Activated CD4-positive, alpha-beta memory T cell treated with anti-CD3 and anti-CD28 coated beads for 36 hours (primary cell): ENCODE measurements at regions of chr6 and their contacts with region 1.

Region 1: DNA sequence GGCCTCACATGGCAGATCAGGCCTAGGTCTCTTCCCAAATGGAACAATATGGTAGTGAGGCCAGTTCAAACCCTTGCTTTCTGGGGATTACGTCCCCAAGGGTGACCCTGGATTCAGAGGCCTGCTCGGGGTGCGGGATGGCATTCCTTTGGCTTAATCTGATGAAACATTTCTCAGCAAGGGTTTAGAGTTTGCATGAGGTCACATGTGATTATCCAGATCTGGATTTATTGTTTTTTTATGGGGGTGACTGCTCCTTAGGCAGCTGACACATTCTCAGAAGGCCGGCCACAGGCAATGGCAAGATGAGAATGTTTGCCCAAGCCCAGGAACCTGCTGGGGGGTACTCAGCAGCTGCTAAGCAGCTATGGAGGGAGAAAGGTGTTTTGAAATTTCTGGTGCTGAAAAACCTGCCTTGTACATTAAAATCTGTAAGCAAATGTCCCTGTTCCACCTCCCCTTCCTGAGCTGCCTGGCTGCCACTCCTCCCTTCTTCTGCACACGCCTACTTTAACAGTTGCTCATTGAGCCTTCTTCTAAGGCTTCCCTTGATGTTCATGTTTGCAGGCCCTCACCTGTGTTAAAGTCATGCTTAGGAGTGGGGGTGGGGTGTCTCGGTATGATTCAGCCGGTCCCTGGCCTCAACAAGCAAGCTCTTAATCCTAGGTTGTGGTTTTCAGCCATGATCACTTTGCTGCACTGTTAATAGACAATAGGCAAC is 37.9 kb upstream of the FUCA2 start:
- DNase-seq: peak; percentile 83
- H3K4me3 Mint-ChIP-seq: no peak overlapping the region
- H3K27ac Mint-ChIP-seq: peak overlapping the region; percentile 63
- H3K4me1 Mint-ChIP-seq: peaks cover 90% of the 10 kb centered on the region
- H3K27me3 Mint-ChIP-seq: no peaks in the 10 kb centered on the region

Region 2: DNA sequence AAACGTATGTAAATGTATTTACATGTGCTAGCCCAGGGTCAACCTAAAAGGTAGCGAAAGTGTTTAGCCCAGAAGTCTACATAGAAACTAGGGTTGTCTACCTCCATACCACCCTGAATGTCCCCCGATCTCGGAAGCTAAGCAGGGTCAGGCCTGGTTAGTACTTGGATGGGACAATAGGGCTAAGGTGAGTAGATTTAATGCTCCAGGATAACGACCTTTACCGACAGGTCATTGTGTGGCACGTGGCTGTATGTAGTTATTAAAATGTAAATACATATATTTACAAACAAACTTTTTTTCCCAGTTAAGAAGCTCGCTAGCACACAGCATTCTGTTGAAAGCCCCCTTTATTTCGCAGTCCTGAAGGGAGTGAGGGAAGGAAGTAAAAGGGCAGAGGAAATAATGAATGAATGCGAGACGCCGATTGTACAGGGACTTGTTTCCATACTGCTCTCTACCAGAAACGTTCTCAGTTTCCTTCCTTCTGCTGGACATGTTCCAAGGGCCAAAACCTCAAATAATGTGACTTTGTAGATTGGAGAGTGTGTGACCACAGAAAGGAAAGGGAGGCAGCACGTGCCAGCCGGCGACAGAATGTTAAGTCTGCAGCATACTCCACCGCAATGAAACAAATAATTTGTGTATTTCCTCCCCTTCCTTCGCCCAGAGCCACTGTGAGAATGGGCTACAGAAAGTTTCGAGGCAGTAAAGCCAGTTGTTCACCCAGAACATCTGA is 99.5 kb before region 1 on chr6:
- CTCF ChIA-PET with region 1: no interaction called
- POLR2A ChIA-PET with region 1: no interaction called
- intact Hi-C with region 1: no loop called
- DNase-seq: peak; percentile 43
- H3K4me3 Mint-ChIP-seq: peak overlapping the region; percentile 88
- H3K27ac Mint-ChIP-seq: peak overlapping the region; percentile 91
- H3K4me1 Mint-ChIP-seq: peaks cover 41% of the 10 kb centered on the region
- H3K27me3 Mint-ChIP-seq: no peaks in the 10 kb centered on the region

Region 3: GRCh38 chr6:143569040-143569439 is 19.7 kb after region 1 on chr6:
- CTCF ChIA-PET with region 1: no interaction called
- POLR2A ChIA-PET with region 1: no interaction called
- intact Hi-C with region 1: loop called (anchors 1 kb)
- DNase-seq: peak; percentile 13
- H3K4me3 Mint-ChIP-seq: no peak overlapping the region
- H3K27ac Mint-ChIP-seq: no peak overlapping the region
- H3K4me1 Mint-ChIP-seq: peaks cover 43% of the 10 kb centered on the region
- H3K27me3 Mint-ChIP-seq: no peaks in the 10 kb centered on the region

Region 4: DNA sequence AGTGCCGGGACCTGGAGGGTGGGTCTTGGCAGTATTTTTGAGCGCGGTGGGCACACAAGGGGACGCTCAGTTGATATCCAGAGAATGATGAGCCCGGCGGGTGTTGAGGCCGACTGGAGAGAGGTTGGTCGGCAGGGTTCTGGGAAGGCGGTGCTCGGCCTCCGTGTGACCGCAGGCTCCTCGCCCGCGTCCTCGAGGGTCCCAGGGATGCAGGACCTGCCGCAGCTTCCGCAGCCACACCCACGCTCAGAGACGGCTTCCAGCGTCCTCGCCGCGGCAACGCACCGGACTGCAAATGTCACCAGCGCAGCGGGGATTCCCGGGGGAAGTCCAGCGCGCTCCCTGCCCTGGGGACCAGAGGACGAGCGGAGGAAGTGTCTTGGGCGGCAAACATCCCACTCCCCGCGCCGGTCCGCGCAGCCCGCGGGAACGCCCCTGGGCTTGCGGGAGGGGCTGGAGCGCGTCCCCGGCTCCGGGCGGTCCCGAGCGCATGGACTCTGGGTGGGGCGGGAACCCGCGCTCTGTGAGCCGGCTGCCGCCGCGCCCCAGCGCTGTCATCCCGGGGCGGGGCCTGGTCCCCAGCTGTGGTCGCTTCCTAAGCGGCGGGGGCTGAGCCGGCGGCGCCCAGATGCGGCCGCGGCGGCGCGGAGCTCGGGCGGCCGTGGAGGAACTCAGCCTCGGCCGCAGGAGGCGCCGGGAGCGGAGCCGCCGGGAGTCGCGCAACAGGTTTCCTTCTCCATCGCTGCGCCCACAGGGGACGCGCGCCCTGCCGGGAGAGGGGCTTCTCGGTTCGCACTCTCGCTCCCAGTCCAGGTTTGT is 600.7 kb after region 1 on chr6 and contains the start of gene STX11:
- CTCF ChIA-PET with region 1: no interaction called
- POLR2A ChIA-PET with region 1: no interaction called
- intact Hi-C with region 1: loop called (anchors 10 kb)
- DNase-seq: peak; percentile 88
- H3K4me3 Mint-ChIP-seq: peak within 1 kb of the TSS; percentile 88
- H3K27ac Mint-ChIP-seq: peak within 1 kb of the TSS; percentile 98
- H3K4me1 Mint-ChIP-seq: peaks cover 41% of the 10 kb centered on the region
- H3K27me3 Mint-ChIP-seq: no peaks in the 10 kb centered on the region
- total RNA-seq, gene STX11: 16.0 to 16.6 TPM